Posterior vena cava (tissue), 2 donors: ENCODE measurements at regions of chr13 and their contacts with region 1.

Region 1: GRCh38 chr13:97855570-97856303 is 97.7 kb upstream of the IPO5 start:
- DNase-seq: peak; percentile 86

Region 2: DNA sequence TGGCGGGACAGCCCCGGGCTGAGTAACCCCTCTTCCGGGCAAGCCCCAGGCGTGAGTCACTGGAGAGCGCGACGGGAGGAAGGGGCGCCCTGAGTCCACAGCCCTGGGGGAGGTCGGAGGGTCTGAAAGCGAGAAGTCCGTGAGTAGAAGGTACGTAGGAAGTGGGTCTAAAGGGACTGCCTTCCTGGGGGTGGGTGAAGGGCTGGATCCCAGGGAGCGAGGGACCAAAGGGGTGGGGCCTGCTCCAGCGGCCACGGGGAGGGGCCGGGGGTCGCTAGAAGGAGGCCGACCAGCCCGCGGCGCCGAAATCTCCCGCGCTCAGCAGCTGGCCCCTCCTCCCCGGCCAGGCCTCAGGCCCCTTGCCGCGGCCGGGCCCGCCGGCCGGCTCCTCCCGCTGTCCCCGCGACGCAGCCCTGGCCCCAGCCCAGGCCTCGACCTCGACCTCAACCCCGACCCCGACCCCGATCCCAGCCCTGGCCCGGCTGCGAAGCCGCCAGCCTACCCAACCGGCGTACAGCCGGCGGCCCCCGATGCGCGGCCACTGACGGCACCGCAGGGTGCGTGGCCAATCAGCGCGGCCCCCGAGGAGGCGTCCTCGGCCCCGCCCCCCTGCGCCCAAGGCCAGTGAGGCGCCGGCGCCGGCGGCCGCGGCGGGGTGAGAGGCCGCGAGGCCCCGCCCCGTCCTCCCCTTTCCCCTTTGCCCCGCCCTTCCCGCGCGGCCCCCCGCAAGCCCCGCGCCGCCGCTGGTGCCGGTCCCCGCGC is 120.3 kb after region 1 on chr13:
- intact Hi-C with region 1: loop called (anchors 5 to 10 kb)
- DNase-seq: peak; percentile 96

Region 3: DNA sequence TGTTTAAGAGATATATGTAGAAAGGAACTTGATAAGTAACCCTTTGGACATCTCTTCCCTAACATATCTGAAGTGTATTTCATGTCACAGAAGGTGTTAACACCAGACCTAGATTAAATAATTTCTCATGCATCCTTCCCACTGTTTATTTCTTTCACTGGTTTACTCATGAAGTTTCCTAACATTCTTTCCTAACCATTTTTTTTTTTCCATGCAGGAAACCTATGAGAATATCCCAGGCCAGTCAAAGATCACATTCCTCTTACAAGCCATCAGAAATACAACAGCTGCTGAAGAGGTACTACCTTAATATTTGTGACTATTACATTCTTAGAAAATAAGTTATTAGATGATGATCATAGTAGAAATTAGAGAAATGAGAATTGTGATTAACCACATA is 126.5 kb after region 1 on chr13:
- intact Hi-C with region 1: loop called (anchors 5 to 10 kb)
- DNase-seq: no peak